AG04449 (cell line): ENCODE measurements at regions of chr1 and their contacts with region 1.

Region 1: GRCh38 chr1:19113697-19114092 is 96.4 kb downstream of the UBR4 start:
- DNase-seq: no peak
- H3K4me3 ChIP-seq: no peak overlapping the region
- CTCF ChIP-seq: peak; percentile 64

Region 2: DNA sequence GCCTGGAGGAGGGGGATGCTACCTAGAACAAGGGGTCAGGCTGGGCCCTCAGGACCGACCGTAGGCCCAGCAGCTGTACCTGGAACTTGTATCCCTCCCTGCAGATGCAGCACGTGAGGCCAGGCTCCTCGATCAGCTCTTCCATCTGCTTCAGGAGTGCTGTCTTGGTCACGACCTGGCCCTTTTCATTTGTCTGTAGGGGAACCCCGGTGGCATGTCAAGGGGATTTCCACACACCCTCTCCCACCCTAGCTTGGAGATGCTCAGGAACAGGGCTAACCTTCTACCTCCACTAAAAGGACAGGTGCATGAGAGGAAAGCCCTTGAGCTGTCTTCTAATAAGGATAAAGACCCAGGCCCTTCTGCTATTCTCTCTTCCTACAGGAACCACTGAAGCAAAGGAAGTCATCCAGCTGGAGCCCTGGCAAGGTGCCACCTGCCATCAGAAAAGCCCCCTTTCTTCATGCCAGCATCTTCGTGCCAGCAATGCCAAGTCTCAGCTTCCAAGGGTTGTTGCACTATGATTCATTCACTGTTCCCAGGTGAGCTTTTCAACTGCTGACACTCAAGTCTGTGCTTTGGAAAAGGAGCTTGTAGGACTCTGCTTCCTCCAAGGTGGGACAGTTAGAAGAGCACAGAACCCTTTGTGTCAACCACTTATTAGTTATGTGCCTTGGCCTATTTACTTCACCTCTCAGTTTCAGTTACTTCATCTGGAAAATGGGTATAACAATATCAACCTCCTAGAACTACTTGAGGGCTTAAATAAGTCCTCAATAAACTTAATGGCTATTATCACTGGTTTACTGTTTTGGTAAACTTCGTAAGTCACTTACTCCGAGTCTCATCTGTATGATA is 25.7 kb before region 1 on chr1:
- CTCF ChIA-PET with region 1: interaction called, 11 read pairs
- POLR2A ChIA-PET with region 1: no interaction called
- DNase-seq: no peak
- H3K4me3 ChIP-seq: no peak overlapping the region
- CTCF ChIP-seq: no peak

Region 3: GRCh38 chr1:19139711-19140110 is 26.0 kb after region 1 on chr1:
- CTCF ChIA-PET with region 1: no interaction called
- POLR2A ChIA-PET with region 1: no interaction called
- DNase-seq: no peak
- H3K4me3 ChIP-seq: no peak overlapping the region
- CTCF ChIP-seq: no peak

Region 4: GRCh38 chr1:19153169-19153568 is 39.5 kb after region 1 on chr1:
- CTCF ChIA-PET with region 1: no interaction called
- POLR2A ChIA-PET with region 1: no interaction called
- DNase-seq: no peak
- H3K4me3 ChIP-seq: no peak overlapping the region
- CTCF ChIP-seq: no peak

Region 5: GRCh38 chr1:19429611-19430010 is 315.9 kb after region 1 on chr1:
- CTCF ChIA-PET with region 1: no interaction called
- POLR2A ChIA-PET with region 1: no interaction called
- DNase-seq: no peak
- H3K4me3 ChIP-seq: no peak overlapping the region
- CTCF ChIP-seq: no peak